SK-N-SH (cell line): ENCODE measurements at regions of chr3 and their contacts with region 1.

Region 1: GRCh38 chr3:159804726-159805410 is 183.8 kb upstream of the IL12A start:
- DNase-seq: peak; percentile 71
- H3K4me3 ChIP-seq: no peak overlapping the region; a peak in 1 of 4 replicates
- H3K27ac ChIP-seq: no peak overlapping the region
- H3K4me1 ChIP-seq: peaks cover 0 to 2% of the 10 kb centered on the region in 2 experiments; a peak in 1 of 4 replicates
- H3K27me3 ChIP-seq: no peaks in the 10 kb centered on the region
- CTCF ChIP-seq: peak; percentile 95
- EP300 ChIP-seq: no peak
- RAD21 ChIP-seq: peak; percentile 99

Region 2: GRCh38 chr3:158845765-158846350 is 959.0 kb before region 1 on chr3:
- CTCF ChIA-PET with region 1: interaction called, 29 read pairs
- POLR2A ChIA-PET with region 1: no interaction called
- DNase-seq: peak; percentile 68
- H3K4me3 ChIP-seq: no peak overlapping the region
- H3K27ac ChIP-seq: no peak overlapping the region
- H3K4me1 ChIP-seq: peaks cover 3 to 9% of the 10 kb centered on the region in 2 experiments; a peak in 2 of 4 replicates
- H3K27me3 ChIP-seq: no peaks in the 10 kb centered on the region
- CTCF ChIP-seq: peak; percentile 84
- EP300 ChIP-seq: no peak
- RAD21 ChIP-seq: peak; percentile 90

Region 3: DNA sequence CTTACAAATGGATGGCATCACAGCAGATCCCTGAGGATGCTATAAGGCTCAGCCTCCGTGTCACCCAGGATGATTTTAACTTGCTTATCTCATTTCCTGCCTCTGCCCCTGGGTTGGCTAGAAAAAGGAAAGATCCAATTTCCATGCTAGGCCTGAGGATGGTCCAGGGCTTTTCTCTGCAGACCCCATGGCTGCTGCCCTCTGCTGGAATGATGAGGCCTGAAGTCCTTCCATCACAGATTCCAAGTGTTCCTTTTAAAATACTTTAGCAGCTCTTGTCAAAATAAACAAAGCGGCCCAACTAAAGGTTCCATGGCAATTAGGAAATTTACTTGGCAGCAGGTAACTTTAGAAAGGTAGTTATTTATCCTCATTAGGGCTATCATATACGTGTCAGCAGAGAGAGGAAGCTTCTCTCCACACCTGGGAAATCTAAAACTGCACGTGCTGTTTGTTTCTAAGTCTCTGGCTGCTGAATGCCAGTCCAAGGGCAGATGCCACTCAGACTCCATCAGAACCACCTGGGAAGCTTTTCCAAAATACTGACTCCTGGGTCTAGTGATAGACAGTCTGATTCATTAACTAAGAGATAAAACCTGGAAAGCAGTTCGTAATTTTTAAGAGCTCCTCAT is 218.2 kb before region 1 on chr3:
- CTCF ChIA-PET with region 1: interaction called, 25 read pairs
- POLR2A ChIA-PET with region 1: no interaction called
- DNase-seq: peak; percentile 49
- H3K4me3 ChIP-seq: no peak overlapping the region; a peak in 1 of 4 replicates
- H3K27ac ChIP-seq: no peak overlapping the region
- H3K4me1 ChIP-seq: peaks cover 0 to 5% of the 10 kb centered on the region in 2 experiments; a peak in 1 of 4 replicates
- H3K27me3 ChIP-seq: no peaks in the 10 kb centered on the region
- CTCF ChIP-seq: peak; percentile 71
- EP300 ChIP-seq: no peak; a peak in 1 of 4 replicates
- RAD21 ChIP-seq: peak; percentile 78

Region 4: GRCh38 chr3:159616212-159616825 is 188.5 kb before region 1 on chr3:
- CTCF ChIA-PET with region 1: interaction called, 14 read pairs
- POLR2A ChIA-PET with region 1: no interaction called
- DNase-seq: no peak
- H3K4me3 ChIP-seq: no peak overlapping the region
- H3K27ac ChIP-seq: no peak overlapping the region
- H3K4me1 ChIP-seq: peaks cover 0 to 3% of the 10 kb centered on the region in 2 experiments; a peak in 2 of 4 replicates
- H3K27me3 ChIP-seq: no peaks in the 10 kb centered on the region
- CTCF ChIP-seq: peak; percentile 76
- EP300 ChIP-seq: no peak
- RAD21 ChIP-seq: peak; percentile 70

Region 5: DNA sequence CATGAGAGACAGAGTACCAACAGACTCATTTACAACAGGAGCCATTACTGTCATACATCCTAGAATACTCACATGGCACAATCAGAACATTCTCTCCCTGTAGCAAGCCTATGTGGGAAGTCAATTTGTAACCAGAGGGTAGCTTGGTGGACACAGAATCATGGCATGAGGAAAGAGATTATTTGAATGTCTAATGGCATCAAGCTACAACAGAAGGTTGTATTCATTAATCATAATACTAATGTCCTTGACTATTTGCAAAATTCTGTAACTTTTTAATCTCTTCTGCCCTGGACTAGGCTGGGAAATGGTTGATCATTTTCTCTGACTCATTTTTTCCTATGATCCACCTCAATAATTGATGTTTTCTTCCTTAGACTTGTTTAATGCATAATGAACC is 161.5 kb before region 1 on chr3:
- CTCF ChIA-PET with region 1: no interaction called
- POLR2A ChIA-PET with region 1: no interaction called
- DNase-seq: no peak
- H3K4me3 ChIP-seq: no peak overlapping the region
- H3K27ac ChIP-seq: no peak overlapping the region
- H3K4me1 ChIP-seq: no peaks in the 10 kb centered on the region
- H3K27me3 ChIP-seq: no peaks in the 10 kb centered on the region
- CTCF ChIP-seq: no peak
- EP300 ChIP-seq: no peak
- RAD21 ChIP-seq: no peak

Region 6: GRCh38 chr3:159775372-159775961 is 29.4 kb before region 1 on chr3:
- CTCF ChIA-PET with region 1: interaction called, 39 read pairs
- POLR2A ChIA-PET with region 1: no interaction called
- DNase-seq: peak; percentile 32
- H3K4me3 ChIP-seq: no peak overlapping the region
- H3K27ac ChIP-seq: peak overlapping the region in 1 of 2 experiments; percentile 71; a peak in 3 of 4 replicates
- H3K4me1 ChIP-seq: peaks cover 4 to 24% of the 10 kb centered on the region in 2 experiments; a peak in 3 of 4 replicates
- H3K27me3 ChIP-seq: no peaks in the 10 kb centered on the region
- CTCF ChIP-seq: no peak
- EP300 ChIP-seq: no peak
- RAD21 ChIP-seq: no peak

Region 7: GRCh38 chr3:159783777-159784743 is 20.8 kb before region 1 on chr3:
- CTCF ChIA-PET with region 1: interaction called, 17 read pairs
- POLR2A ChIA-PET with region 1: no interaction called
- DNase-seq: no peak
- H3K4me3 ChIP-seq: no peak overlapping the region
- H3K27ac ChIP-seq: no peak overlapping the region
- H3K4me1 ChIP-seq: peaks cover 8 to 35% of the 10 kb centered on the region in 2 experiments; a peak in 3 of 4 replicates
- H3K27me3 ChIP-seq: no peaks in the 10 kb centered on the region
- CTCF ChIP-seq: no peak
- EP300 ChIP-seq: no peak
- RAD21 ChIP-seq: no peak

Region 8: GRCh38 chr3:159988617-159989271 is 183.9 kb after region 1 on chr3 and contains the start of gene IL12A:
- CTCF ChIA-PET with region 1: interaction called, 10 read pairs
- POLR2A ChIA-PET with region 1: no interaction called
- DNase-seq: peak; percentile 92
- H3K4me3 ChIP-seq: peak within 1 kb of the TSS; percentile 71 to 87
- H3K27ac ChIP-seq: no peak within 1 kb of the TSS
- H3K4me1 ChIP-seq: peaks cover 0 to 5% of the 10 kb centered on the region in 2 experiments; a peak in 1 of 4 replicates
- H3K27me3 ChIP-seq: no peaks in the 10 kb centered on the region
- CTCF ChIP-seq: peak; percentile 97
- EP300 ChIP-seq: no peak
- RAD21 ChIP-seq: peak; percentile 50
- polyA plus RNA-seq, gene IL12A: 0.97 and 1.9 TPM in 2 replicates